ENCODE measurements at regions of chr19 and their contacts with region 1.

Region 1: DNA sequence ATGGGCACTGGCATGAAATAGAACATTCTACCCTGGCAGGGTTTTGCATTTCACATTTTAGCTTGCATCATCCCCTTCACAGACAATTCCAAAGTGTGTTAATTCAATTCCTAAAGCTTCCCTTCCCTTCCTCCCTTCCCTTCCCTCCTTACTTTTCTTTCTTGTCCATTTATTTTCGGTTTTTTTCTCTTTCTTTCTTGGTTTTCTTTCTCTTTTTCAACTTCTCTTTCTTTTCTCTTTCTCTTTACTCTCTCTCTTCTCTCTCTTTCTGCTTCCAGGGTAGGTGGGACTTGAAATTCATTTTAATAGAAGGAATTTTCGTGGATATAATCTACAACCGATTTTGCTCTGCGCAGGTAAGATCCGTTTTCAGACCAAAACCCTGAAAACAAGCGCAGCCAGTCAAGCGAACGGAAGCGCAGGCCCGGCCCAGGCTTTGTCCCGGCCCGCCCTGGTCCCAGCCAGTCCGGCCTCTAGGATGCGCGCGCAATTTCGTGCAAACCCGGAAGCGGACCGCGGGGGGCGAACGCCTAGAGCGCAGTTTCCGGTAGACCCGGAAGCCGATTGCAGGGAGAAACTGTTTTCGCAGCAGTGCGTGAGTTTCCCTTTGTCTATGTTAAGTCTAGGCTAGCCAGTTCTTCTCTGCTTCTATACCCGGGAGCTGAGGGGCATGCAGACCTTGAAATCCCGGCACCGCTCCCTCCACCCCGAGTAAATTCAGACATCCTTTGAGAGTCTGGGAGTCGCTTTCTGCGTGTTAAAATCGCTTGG is at the start of gene ZNF528:
- DNase-seq: peak; percentile 85
- H3K4me3 Mint-ChIP-seq: peak within 1 kb of the TSS; percentile 92
- H3K27ac Mint-ChIP-seq: peak within 1 kb of the TSS; percentile 87
- H3K4me1 Mint-ChIP-seq: peaks cover 12% of the 10 kb centered on the region
- H3K27me3 Mint-ChIP-seq: no peaks in the 10 kb centered on the region
- total RNA-seq, gene ZNF528: 5.2 and 5.5 TPM in 2 replicates

Region 2: GRCh38 chr19:52155596-52156359 is 241.7 kb before region 1 on chr19:
- intact Hi-C with region 1: no loop called
- DNase-seq: no peak
- H3K4me3 Mint-ChIP-seq: no peak overlapping the region
- H3K27ac Mint-ChIP-seq: no peak overlapping the region
- H3K4me1 Mint-ChIP-seq: no peaks in the 10 kb centered on the region
- H3K27me3 Mint-ChIP-seq: no peaks in the 10 kb centered on the region

Region 3: DNA sequence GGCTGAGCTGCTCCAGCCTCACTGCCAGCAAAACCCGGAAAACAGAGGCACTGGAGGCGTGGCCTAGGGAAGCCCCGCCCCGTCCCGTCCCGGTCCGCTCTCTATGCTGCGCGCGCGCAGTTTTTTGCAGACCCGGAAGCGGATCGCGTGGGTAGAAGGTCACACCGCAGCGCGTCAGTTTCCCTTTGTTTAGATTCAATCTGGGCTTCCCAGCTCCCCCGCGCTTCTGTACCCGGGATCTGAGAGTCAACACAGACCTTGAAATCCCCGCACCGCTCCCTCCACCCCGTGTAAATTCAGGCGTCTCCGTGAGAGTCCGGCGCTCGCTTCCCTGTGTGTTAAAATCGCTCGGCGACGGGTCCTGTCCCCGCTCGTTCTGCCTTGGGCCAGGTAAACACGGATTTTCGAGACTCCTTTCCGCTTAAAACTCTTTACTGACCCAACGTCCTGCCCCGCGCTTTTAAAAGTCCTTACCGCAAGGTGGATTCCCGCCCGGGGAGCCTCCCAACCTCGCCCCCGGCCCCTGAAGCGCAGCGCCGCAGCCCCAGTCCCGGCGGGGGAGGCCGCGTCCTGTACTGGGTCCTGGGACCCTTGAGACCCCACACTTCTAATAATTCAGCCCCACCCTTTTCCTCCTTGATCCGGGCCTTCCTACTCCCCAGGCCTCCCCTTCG is 61.2 kb before region 1 on chr19 and contains the start of gene ZNF610:
- intact Hi-C with region 1: loop called (anchors 5 kb)
- DNase-seq: peak; percentile 82
- H3K4me3 Mint-ChIP-seq: peak within 1 kb of the TSS; percentile 91
- H3K27ac Mint-ChIP-seq: peak within 1 kb of the TSS; percentile 92
- H3K4me1 Mint-ChIP-seq: peaks cover 8% of the 10 kb centered on the region
- H3K27me3 Mint-ChIP-seq: no peaks in the 10 kb centered on the region
- total RNA-seq, gene ZNF610: 0.50 and 1.1 TPM in 2 replicates